Activated CD8-positive, alpha-beta T cell treated with anti-CD3 and anti-CD28 coated beads, Interleukin-2, amount 10 ng/mL, durations not matched to agents 7 days and 5 days (primary cell): ENCODE measurements at regions of chr3 and their contacts with region 1.

Region 1: GRCh38 chr3:141561426-141562034 is 74.7 kb downstream of the RASA2 start:
- DNase-seq: peak; percentile 69
- ATAC-seq: peak; percentile 60
- H3K4me3 Mint-ChIP-seq: no peak overlapping the region
- H3K27ac Mint-ChIP-seq: no peak overlapping the region
- H3K4me1 Mint-ChIP-seq: peaks cover 22% of the 10 kb centered on the region
- H3K27me3 Mint-ChIP-seq: no peaks in the 10 kb centered on the region

Region 2: GRCh38 chr3:141311496-141312353 is 249.8 kb before region 1 on chr3:
- CTCF ChIA-PET with region 1: interaction called, 10 read pairs
- POLR2A ChIA-PET with region 1: interaction called, 3 read pairs
- DNase-seq: peak; percentile 100
- ATAC-seq: peak; percentile 95
- H3K4me3 Mint-ChIP-seq: peak overlapping the region; percentile 85
- H3K27ac Mint-ChIP-seq: peak overlapping the region; percentile 99
- H3K4me1 Mint-ChIP-seq: peaks cover 57% of the 10 kb centered on the region
- H3K27me3 Mint-ChIP-seq: no peaks in the 10 kb centered on the region

Region 3: GRCh38 chr3:141477224-141477623 is 84.3 kb before region 1 on chr3:
- CTCF ChIA-PET with region 1: interaction called, 93 read pairs
- POLR2A ChIA-PET with region 1: no interaction called
- DNase-seq: no peak
- ATAC-seq: no peak
- H3K4me3 Mint-ChIP-seq: no peak overlapping the region
- H3K27ac Mint-ChIP-seq: no peak overlapping the region
- H3K4me1 Mint-ChIP-seq: peaks cover 41% of the 10 kb centered on the region
- H3K27me3 Mint-ChIP-seq: peaks cover 19% of the 10 kb centered on the region

Region 4: GRCh38 chr3:141493184-141493583 is 68.3 kb before region 1 on chr3:
- CTCF ChIA-PET with region 1: interaction called, 30 read pairs
- POLR2A ChIA-PET with region 1: no interaction called
- DNase-seq: no peak
- ATAC-seq: peak; percentile 62
- H3K4me3 Mint-ChIP-seq: no peak overlapping the region
- H3K27ac Mint-ChIP-seq: peak overlapping the region; percentile 58
- H3K4me1 Mint-ChIP-seq: peaks cover 91% of the 10 kb centered on the region
- H3K27me3 Mint-ChIP-seq: no peaks in the 10 kb centered on the region

Region 5: GRCh38 chr3:141575879-141576743 is 14.6 kb after region 1 on chr3:
- CTCF ChIA-PET with region 1: interaction called, 10 read pairs
- POLR2A ChIA-PET with region 1: interaction called, 4 read pairs
- DNase-seq: no peak
- ATAC-seq: peak; percentile 79
- H3K4me3 Mint-ChIP-seq: peak overlapping the region; percentile 53
- H3K27ac Mint-ChIP-seq: peak overlapping the region; percentile 74
- H3K4me1 Mint-ChIP-seq: peaks cover 10% of the 10 kb centered on the region
- H3K27me3 Mint-ChIP-seq: no peaks in the 10 kb centered on the region